ENCODE measurements at regions of chr6 and their contacts with region 1.

Region 1: DNA sequence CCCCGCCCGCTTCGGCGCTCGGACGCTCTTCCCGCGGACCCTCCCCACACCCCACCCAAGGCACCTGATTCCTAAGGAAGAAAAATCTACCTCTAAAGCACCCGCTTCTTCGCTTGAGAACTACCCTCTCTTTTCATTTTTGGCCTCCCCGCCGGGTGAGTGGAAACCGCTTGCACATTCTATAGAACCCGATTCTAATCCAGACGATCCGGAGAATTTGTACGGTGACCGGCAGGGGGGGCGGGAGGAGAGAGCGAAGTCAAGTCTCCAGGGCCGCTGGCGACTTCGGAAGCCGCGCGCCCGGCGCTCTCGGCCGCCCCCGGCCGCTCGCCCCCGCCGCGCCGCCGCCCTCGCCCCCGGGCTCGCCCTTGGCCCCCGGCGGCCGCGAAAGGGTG is at the start of gene RBM24:
- DNase-seq: peak in 1 of 2 donors; percentile 84
- H3K4me3 ChIP-seq: peak within 1 kb of the TSS; percentile 82 to 97
- H3K27ac ChIP-seq: peak within 1 kb of the TSS; percentile 75 to 91
- H3K4me1 ChIP-seq: peaks cover 0 to 3% of the 10 kb centered on the region in 2 donors
- H3K27me3 ChIP-seq: no peaks in the 10 kb centered on the region
- CTCF ChIP-seq: peak; percentile 18 to 44 (median 41)
- total RNA-seq, gene RBM24: 5.4 TPM

Region 2: DNA sequence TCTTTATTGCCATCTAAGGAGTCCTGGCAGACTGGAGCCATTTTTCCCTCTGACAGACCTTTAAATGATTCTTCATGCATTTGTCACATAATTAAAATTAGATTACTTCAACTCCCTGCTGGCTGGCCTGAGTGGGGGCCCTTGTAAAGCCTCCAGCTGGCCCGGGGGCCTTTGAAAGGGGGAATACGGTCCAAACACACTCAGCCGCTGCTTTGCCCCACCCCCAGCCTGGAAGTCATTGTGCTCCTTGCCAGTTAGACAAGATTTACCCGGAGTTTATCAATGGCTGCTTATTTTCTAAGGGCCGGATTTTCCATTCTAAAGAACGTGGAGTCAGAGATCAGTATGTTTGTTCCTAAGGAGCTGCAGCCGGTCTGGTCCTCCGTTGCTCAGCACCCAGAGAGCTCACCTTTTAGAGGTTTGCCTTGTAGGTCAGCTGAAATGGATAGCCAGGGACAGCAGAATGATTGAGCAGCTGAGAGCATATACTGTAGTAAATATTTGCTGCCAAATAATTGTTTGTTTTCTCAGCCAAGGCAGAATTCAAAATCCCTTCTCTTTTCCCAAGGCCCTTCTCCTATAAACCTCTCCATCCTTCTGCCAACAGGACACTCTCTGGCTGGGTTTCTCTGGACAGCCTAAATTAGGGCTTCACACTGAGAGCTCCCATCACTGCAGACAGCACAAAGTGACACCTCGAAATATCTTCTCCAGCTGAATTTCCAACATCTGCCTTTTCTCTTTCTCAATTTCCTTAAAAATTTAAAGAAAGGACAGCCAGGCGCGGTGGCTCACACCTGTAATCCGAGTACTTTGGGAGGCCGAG is 68.3 kb before region 1 on chr6:
- intact Hi-C with region 1: loop called (anchors 5 kb)
- DNase-seq: peak in 1 of 2 donors; percentile 82
- H3K4me3 ChIP-seq: peak overlapping the region in 1 of 2 donors; percentile 30
- H3K27ac ChIP-seq: peak overlapping the region; percentile 47 to 48
- H3K4me1 ChIP-seq: peaks cover 0 to 3% of the 10 kb centered on the region in 2 donors
- H3K27me3 ChIP-seq: no peaks in the 10 kb centered on the region
- CTCF ChIP-seq: no peak

Measured in ascending aorta (tissue), 2 donors.